HEK293T (cell line): ENCODE measurements at regions of chr16 and their contacts with region 1.

Region 1: DNA sequence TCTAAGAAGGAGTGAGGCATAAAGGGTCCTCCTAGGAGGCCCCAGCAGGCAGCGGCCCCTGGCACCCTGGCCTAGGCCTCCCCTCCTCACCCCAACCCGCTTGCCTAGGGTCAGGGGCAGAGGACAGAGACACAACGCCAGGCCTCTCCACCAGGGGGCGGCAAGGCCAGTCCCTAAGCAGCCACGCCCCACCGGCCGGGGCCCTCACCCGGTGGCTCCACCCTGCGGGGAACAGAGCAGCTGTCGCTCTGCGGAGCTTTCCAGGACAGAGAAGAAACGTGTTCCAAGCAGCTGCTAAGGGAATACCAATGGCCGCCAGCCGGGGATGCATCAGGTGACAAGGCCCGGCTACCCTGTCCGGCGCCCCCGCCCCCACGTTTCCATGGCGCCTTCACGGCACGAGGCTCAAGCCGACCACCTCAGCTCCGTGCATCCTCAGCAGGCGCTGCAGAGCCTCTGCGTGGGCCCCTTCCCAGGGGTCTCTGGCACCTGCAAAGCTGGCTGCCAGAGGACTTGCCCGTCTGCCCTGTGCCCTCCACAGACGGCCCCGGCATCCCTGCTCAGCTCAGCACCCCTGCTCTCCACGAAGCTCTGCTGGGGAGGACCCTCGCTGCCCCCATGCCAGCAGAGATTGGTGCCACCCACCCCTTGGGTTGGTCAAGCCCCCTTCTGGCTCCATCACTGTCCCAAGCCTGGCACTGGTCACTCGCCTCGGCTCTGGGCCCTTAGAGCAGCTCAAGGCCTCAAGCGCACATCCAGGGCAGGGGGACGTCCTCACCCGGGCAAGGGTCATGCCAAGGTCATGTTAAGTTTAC is 5.6 kb downstream of the ZNF598 start:
- DNase-seq: peak; percentile 91

Region 2: DNA sequence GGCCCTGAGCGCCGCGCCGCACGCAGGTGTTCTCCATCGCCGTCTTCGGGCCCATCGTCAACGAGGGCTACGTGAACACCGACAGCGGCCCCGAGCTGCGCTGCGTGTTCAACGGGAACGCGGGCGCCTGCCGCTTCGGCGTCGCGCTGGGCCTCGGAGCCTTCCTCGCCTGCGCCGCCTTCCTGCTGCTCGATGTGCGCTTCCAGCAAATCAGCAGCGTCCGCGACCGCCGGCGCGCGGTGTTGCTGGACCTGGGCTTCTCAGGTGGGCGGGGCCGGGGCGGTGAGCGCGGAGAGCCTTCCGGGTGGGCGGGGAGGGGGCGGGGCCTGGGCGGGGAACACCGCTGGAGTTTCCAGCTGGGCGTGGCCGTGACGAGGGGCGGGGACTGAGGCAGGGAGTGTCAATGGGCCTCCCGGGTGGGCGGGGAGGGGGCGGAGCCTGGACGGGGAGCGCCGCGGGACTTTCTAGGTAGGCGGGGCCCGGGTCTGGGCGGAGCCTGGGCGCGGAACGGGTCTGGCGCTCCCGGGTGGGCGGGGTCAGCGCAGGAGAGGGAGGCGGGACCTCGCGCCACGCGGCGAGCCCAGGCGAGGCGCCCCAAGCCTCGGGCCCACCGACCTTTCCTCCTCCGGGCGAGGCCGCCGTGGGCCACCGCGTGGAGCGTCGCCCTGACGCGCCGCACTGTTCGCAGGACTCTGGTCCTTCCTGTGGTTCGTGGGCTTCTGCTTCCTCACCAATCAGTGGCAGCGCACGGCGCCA is 11.9 kb before region 1 on chr16:
- CTCF ChIA-PET with region 1: interaction called, 13 read pairs
- POLR2A ChIA-PET with region 1: interaction called, 6 read pairs
- DNase-seq: peak; percentile 98

Region 3: DNA sequence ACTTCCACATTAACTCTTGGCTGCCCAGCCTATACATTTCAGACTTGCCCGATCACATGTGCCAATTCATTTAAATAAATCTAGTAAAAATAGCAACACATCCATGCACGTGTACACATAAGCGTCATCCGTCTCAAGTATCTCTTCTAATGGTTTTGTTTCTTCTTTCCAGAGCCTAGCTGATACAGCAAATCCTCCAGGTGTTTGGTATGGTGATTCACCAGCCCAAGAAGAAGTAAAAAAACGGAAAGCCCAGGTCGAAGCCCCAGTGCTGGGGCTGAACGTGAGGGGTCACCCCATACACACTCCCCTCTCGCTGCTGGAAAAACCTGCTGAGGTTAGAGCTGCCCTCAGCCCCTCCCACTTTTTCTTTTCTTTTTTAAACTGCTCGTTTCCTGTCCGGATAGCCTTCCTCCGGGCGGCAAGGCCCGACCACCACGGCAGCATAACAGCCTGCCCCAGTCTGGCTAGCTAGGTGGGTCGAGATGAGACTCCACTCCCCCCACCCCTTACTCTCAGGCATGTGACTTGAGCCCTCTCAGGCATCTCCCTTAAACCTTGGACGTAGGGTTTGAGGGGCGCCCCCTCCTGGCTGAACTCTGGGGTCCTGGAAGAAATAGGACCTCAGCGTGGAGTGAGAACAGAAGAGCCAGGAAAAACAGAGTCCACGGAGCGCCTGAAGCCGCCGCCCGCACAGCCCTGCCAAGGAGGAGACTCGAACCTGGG is 1170.0 kb after region 1 on chr16:
- CTCF ChIA-PET with region 1: no interaction called
- POLR2A ChIA-PET with region 1: no interaction called
- DNase-seq: peak; percentile 66